ENCODE measurements at regions of chr2 and their contacts with region 1.

Region 1: DNA sequence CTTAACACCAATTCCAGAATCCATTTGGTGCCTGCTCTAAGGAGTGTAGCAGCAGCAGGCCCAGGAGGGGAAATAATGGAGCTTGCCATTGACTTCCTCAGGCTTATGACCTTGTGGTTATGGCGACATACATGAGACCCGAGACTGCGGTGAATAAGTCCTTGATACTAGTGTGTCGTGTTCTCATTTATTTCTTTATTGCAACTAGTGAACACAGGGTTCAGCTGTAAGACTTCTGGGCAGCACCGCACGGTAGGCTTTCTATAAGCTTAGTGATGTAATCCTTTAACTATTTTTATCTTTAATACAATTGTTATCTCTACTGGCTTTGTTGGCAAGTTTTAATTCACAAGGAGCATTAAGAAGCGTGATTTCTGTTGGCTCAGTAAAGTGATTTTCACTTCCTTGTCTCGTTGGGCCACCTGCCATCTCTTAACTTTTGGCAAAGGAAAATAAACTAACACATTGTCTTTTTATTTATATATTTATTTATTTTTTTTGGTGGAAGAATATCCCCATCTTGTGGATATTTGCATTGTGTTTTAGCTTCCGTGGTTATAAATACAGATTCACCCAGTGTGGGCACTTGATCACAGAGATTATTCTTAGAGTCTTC is 139.8 kb downstream of the LTBP1 start:
- DNase-seq: peak; percentile 10
- H3K27ac ChIP-seq: no peak overlapping the region
- CTCF ChIP-seq: no peak

Region 2: DNA sequence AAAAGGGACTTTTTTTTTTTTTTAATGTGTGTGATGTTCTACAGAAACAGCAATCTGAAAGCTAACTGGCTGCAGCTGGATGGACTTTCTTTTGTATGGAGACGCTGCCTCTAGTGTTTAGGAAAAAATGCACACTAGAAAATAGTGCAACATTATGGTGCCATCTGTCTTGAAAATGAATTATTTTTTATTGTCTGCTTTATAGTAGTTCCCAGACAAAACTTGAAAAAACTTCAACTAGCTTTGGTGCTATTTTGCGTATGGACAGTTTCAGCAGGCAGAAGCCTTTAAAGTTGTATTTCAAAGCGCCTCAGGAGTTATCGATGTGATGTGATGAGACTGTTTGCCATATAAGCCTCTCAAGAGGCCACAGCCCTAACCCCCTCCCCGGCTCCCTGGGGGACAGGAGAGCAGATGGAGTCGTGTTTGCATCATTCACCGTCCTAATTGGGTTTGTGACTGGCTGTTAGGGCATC is 52.9 kb before region 1 on chr2:
- CTCF ChIA-PET with region 1: interaction called, 18 read pairs
- POLR2A ChIA-PET with region 1: interaction called, 4 read pairs
- DNase-seq: no peak
- H3K27ac ChIP-seq: no peak overlapping the region
- CTCF ChIP-seq: peak; percentile 64

Measured in RWPE1 (cell line).